BJ (cell line): ENCODE measurements at regions of chr1 and their contacts with region 1.

Region 1: DNA sequence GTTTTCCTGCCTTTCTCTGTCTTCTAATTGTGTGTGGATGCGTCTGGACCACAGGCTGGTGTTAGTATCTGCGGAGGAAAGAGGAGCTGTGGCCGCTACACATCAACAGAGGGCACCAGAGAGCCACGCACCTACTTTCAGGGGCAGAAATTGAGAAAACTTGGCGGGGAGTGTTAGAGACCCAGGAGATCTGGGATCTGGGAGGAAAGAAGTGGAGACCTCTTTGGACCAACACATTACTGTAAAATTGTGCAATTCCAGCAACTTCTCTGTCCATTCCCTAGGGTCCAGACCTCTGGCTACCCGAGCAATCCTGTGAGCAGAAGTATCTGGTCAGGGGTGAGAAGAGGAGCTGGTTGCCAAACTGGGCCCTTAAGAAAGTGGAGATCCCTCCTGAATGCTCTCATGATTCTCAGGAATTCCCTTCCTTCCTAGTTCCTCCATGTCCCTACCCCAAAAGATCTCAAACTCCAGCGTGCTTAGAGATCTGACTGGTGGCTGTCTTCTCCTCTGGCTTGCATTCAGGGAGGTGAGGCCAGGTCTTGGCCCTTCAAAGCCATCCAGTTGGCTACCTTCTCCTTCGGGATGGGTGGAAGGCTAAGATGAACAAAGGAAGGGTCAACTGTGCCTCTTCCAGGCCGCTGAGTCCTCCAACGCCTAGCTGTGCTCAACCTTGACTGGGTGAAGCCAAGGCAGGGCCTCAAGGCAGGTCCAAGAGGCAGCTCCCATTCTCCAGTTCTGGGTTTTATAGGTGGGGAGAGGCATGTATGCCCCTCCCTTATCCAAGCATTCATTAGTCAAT is 1.2 kb upstream of the KIRREL1 start:
- DNase-seq: no peak
- H3K4me3 ChIP-seq: no peak overlapping the region
- H3K27me3 ChIP-seq: 0 out of 2 replicates have a peak, but pooled peaks cover 1% of the 10 kb centered on the region
- CTCF ChIP-seq: peak; percentile 99

Region 2: GRCh38 chr1:157862114-157863070 is 129.8 kb before region 1 on chr1:
- CTCF ChIA-PET with region 1: no interaction called
- POLR2A ChIA-PET with region 1: no interaction called
- DNase-seq: no peak
- H3K4me3 ChIP-seq: no peak overlapping the region
- H3K27me3 ChIP-seq: no peaks in the 10 kb centered on the region
- CTCF ChIP-seq: no peak

Region 3: DNA sequence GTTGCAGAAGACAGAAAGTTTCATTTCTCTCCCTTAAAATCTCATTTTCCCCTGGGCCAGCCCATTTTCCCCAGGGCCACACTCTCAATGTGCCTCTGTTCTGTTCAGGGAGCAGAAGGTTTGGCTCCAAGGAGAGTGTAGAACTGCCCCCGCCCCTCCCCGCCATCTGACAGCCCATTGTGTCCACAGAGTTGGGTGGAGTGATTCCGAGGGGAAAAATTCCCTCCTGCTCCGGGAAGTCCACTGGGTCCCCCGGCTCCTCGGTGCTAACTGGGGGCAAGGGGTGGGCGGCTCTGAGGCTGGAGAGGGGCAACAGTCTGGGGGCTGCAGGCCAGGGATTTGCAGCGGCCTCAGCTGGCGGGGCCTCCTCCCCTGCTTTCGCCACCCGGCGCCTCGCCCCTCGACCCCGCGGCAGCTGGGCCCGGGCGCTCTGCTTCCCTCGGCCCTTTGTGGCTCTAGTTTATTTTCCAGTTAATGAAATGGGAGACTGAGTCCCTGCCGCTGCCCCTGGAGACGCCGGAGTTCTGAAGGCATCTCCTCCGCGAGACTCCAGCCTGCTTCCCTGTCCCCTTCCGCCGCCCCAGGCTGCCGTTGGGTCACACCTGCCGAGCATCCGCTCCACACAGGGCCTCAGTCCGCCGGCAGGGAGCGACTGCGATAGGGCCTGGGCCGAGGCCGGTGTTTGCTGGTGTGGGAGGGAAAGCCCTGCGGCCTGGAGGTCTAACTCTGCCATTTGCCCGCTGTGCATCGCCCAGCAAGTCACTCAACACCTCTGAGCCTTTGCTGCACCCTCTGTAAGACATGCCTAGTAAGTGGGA is 13.4 kb before region 1 on chr1:
- CTCF ChIA-PET with region 1: interaction called, 96 read pairs
- POLR2A ChIA-PET with region 1: no interaction called
- DNase-seq: no peak
- H3K4me3 ChIP-seq: no peak overlapping the region; the same call in 1 of the 2 replicates
- H3K27me3 ChIP-seq: peaks cover 14% of the 10 kb centered on the region
- CTCF ChIP-seq: peak; percentile 19; the same call in 1 of the 2 replicates

Region 4: GRCh38 chr1:158067662-158068061 is 75.4 kb after region 1 on chr1:
- CTCF ChIA-PET with region 1: interaction called, 34 read pairs
- POLR2A ChIA-PET with region 1: no interaction called
- DNase-seq: peak; percentile 34
- H3K4me3 ChIP-seq: no peak overlapping the region
- H3K27me3 ChIP-seq: no peaks in the 10 kb centered on the region
- CTCF ChIP-seq: no peak

Region 5: DNA sequence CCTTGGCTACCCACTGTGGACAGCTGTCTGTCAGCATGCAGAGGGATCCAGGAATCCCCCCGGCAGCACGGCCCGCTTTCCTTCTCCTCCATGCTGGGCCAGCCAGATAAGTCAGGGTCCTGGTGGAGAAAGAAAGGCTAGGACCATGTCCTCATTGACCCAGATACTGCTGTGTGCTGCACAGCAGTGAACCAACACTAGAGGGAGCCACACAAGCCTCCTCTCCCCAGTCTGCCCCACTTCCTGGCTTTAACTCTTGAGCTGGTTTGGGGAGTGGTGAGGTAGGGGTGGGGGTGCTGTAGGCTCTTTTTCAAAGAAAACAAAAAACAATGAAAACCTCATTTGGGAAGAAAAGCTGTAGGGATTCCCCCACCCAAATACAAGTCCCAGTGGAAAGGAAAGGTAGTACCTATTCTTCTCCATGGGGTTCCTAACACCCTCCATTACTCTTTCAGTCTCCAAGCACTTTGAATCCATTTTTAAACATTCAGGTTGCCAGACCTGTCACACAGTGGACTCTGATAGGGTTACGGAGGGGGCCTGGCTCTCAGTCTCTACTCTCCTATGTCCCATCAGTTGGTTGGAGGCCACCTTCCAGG is 103.6 kb after region 1 on chr1:
- CTCF ChIA-PET with region 1: interaction called, 98 read pairs
- POLR2A ChIA-PET with region 1: interaction called, 4 read pairs
- DNase-seq: no peak
- H3K4me3 ChIP-seq: no peak overlapping the region
- H3K27me3 ChIP-seq: no peaks in the 10 kb centered on the region
- CTCF ChIP-seq: peak; percentile 81

Region 6: DNA sequence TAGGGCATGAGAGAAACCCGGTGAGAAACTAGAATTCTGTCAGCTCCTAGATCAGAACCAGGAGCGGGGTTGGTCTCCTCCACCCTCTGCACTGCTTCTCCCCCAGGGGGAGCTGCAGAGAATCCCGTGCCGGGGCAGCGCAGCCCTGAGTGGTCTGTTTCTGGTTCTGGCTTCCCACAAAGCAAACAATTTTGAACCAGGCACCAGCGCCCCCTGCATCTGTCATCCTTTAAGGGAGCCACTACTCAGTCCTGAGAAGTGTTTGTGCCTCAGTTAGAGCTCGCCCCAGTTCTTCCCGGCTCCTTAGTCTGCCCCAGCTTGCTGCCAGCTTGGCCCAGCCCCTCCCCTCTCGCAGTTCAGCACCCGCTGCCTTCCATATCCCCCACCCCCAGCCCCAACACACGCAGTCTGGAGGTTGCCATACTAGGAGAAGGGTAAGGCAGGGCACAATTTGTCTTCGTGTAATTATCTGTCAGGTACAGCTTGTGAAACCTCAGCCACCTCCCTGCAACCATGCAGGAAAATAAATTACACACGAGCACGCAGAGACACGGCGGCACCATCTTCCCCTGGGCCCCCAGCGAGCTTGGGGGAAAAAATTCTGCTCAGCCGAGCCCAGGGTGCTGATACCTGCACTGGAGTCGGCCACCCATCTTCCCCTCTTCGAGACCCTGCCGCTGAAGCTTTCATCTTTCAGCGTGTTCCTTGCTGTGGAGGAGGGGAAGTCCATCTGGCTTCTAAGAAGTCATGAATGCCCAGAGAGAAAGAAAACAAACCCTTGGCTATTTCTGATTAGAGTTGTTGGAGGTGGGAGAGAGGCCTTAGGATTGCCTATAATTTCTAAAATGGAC is 125.8 kb after region 1 on chr1:
- CTCF ChIA-PET with region 1: interaction called, 187 read pairs
- POLR2A ChIA-PET with region 1: no interaction called
- DNase-seq: no peak
- H3K4me3 ChIP-seq: no peak overlapping the region
- H3K27me3 ChIP-seq: peaks cover 7% of the 10 kb centered on the region
- CTCF ChIP-seq: peak; percentile 71